Activated T-helper 1 cell treated with anti-CD3 and anti-CD28 coated beads, Interleukin-12 subunit alpha, Interleukin-12 subunit beta, Interleukin-2, Interleukin-4 antibody, amounts not matched to agents 30 ng/mL and 10 ng/mL and 1 ng/mL, durations not matched to agents 14 hours and 24 hours and 36 hours (primary cell): ENCODE measurements at regions of chr7 and their contacts with region 1.

Region 1: DNA sequence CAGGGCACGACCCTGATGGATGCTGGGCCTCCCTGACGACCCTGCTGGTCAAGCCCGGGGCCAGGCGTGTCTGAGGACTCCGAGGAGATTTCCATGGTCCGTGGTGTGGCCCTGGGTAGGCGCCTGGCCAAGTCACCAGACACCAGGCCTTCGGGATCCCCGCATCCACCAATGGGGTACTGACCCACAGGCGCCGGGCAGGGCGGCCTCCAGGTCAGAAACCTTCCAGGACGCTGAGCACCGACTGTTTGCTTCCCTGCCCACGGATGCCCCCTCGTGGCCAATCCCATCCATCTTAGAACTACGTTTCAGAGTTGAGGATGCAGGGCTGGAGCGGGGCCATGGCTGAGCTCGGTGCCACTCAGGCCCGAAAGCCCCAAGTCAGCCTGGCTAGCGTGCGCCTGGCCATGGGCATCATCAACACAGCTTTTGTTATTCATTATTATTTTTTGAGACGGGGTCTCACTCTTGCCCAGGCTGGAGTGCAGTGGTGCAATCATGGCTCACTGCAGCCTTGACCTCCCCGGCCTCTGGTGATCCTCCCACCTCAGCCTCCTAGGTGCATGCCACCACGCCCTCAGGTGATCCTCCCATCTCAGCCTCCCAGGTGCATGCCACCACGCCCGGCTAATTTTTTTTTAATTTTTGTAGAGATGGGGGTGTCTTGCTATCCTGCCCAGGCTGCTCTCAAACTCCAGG is 7.1 kb upstream of the AMZ1 start:
- DNase-seq: peak; percentile 38
- H3K4me3 Mint-ChIP-seq: no peak overlapping the region
- H3K27ac Mint-ChIP-seq: no peak overlapping the region
- H3K4me1 Mint-ChIP-seq: no peaks in the 10 kb centered on the region
- H3K27me3 Mint-ChIP-seq: peaks cover 7% of the 10 kb centered on the region

Region 2: DNA sequence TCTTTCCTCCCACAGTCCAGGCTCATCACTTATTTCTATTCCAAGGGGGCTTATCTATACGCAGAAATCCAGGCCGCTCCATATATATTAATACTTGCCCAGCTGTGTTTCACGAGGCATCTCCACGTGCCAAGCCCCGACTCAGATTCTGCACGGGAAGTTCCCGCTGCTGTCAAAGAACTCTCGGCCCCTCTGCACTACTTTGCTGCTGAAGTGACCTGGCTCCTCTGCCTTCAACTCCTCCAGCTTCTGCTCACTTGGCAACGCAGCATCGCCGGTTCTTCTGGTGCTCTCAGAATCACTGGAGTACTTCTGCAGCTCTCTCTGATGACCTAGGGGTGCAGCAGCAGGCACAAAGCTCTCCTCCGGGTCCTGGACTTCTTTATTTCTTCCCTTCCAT is 287.2 kb before region 1 on chr7:
- intact Hi-C with region 1: no loop called
- DNase-seq: no peak
- H3K4me3 Mint-ChIP-seq: no peak overlapping the region
- H3K27ac Mint-ChIP-seq: no peak overlapping the region
- H3K4me1 Mint-ChIP-seq: peaks cover 6% of the 10 kb centered on the region
- H3K27me3 Mint-ChIP-seq: no peaks in the 10 kb centered on the region

Region 3: GRCh38 chr7:2477447-2478398 is 203.2 kb before region 1 on chr7:
- intact Hi-C with region 1: loop called (anchors 1 kb)
- DNase-seq: peak; percentile 52
- H3K4me3 Mint-ChIP-seq: no peak overlapping the region
- H3K27ac Mint-ChIP-seq: no peak overlapping the region
- H3K4me1 Mint-ChIP-seq: no peaks in the 10 kb centered on the region
- H3K27me3 Mint-ChIP-seq: peaks cover 5% of the 10 kb centered on the region

Region 4: DNA sequence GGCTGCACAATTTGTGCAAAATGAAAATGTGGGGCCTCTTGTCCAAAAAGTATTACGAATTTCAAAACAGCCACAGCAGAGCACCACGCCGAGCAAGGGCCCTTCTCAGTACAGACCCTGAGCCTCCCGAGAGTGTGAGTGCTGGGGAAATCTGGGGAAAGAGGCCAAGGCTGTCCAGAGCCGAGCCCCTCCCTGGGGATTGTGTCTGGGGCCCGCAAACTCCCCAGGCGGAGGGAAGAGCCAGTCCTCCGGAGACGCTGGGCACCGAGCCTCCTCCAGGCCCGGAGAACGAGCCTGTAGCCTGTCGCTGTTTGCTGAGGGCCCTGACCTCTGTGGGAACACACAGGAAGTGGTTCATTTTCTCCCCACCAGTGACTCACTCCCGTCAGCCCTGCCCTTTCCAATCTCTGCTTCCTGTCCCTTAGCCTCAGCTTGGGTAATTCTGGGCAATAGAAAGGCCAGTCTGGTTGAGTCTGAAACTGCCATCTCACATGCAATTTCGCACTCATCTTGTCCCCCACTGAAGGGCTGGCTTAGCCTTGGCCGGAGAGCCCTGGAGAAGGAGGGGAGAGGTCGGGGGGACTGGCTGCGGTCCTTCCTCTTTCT is 182.6 kb after region 1 on chr7:
- intact Hi-C with region 1: no loop called
- DNase-seq: peak; percentile 75
- H3K4me3 Mint-ChIP-seq: peak overlapping the region; percentile 73
- H3K27ac Mint-ChIP-seq: peak overlapping the region; percentile 86
- H3K4me1 Mint-ChIP-seq: peaks cover 27% of the 10 kb centered on the region
- H3K27me3 Mint-ChIP-seq: no peaks in the 10 kb centered on the region